SK-N-SH (cell line): ENCODE measurements at regions of chr18 and their contacts with region 1.

Region 1: GRCh38 chr18:75209129-75209950 is at the start of gene PTGR3:
- DNase-seq: peak; percentile 93
- H3K4me3 ChIP-seq: peak within 1 kb of the TSS; percentile 90 to 98
- H3K27ac ChIP-seq: peak within 1 kb of the TSS; percentile 82 to 97
- H3K4me1 ChIP-seq: peaks cover 19 to 33% of the 10 kb centered on the region in 2 experiments; a peak in 3 of 4 replicates
- H3K27me3 ChIP-seq: no peaks in the 10 kb centered on the region
- CTCF ChIP-seq: no peak
- EP300 ChIP-seq: peak in 1 of 2 experiments; percentile 5; a peak in 1 of 4 replicates
- RAD21 ChIP-seq: no peak
- polyA plus RNA-seq, gene PTGR3: 20.7 and 27.1 TPM in 2 replicates

Region 2: GRCh38 chr18:75023473-75023872 is 185.9 kb before region 1 on chr18:
- CTCF ChIA-PET with region 1: no interaction called
- POLR2A ChIA-PET with region 1: no interaction called
- DNase-seq: no peak
- H3K4me3 ChIP-seq: no peak overlapping the region
- H3K27ac ChIP-seq: no peak overlapping the region
- H3K4me1 ChIP-seq: no peaks in the 10 kb centered on the region; a peak in 2 of 4 replicates
- H3K27me3 ChIP-seq: no peaks in the 10 kb centered on the region
- CTCF ChIP-seq: no peak
- EP300 ChIP-seq: no peak
- RAD21 ChIP-seq: no peak

Region 3: DNA sequence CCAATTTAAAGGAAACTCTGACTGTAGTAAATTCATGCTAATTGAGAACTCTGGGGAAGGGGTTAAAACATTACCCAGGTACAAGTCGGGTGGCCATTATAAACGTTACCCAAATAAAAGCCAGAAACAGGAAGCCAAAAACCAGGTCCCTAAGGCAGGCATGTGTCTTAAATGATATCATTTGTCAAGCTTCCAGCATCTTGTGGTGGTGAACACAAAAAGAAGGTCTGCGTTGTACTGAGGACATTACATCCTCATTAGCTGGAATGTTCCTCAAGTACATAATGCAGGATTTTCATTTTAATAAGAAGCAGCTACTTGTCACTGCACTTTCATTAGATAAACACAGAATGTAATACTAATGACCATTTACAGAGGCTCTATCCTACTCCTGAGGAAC is 11.3 kb before region 1 on chr18:
- CTCF ChIA-PET with region 1: no interaction called
- POLR2A ChIA-PET with region 1: no interaction called
- DNase-seq: no peak
- H3K4me3 ChIP-seq: no peak overlapping the region
- H3K27ac ChIP-seq: peak overlapping the region in 1 of 2 experiments; percentile 22; a peak in 1 of 4 replicates
- H3K4me1 ChIP-seq: peaks cover 15 to 49% of the 10 kb centered on the region in 2 experiments; a peak in 2 of 4 replicates
- H3K27me3 ChIP-seq: no peaks in the 10 kb centered on the region
- CTCF ChIP-seq: no peak
- EP300 ChIP-seq: no peak
- RAD21 ChIP-seq: no peak

Region 4: DNA sequence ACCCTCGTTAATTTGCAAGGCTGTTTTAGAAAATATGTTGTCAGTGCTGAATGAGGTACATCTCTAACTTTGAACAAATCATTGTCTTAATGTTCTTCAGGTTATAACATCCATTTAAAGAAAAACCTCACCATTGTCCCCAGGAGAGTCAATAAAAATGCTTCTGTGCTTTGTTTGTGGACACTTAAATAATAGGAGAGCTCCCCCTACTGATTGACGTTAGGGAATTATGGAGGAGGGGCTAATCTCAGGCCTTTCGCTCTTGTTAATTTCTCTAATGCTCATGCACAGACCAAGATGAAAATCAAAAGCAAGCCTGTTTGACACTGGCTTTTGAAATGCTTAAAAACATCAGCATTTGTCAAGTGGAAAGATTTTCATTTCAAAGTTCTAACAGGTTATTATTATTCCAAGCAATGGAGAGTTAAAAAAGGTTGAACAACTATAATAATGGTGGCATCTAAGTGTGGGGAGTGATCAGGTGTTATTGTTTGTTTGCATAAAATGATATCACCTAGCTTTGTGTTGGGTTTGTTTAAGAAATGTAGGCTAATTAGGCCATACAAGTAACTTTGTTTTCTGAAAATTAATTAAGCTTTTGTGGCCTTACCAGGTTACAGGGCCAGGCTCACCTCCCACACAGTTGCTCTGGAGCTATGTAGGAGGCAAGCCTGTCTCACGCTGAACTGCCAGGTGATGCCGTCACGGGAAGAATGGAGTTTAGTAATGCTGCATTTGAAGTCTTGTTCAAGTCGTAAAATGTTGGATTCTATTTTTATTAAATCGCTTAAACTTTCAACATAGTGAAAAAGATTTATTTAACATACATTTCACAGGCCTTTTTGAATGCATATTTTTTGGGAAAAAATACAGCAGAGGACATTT is 269.9 kb after region 1 on chr18:
- CTCF ChIA-PET with region 1: interaction called, 10 read pairs
- POLR2A ChIA-PET with region 1: no interaction called
- DNase-seq: peak; percentile 57
- H3K4me3 ChIP-seq: no peak overlapping the region; a peak in 1 of 4 replicates
- H3K27ac ChIP-seq: no peak overlapping the region
- H3K4me1 ChIP-seq: no peaks in the 10 kb centered on the region
- H3K27me3 ChIP-seq: no peaks in the 10 kb centered on the region
- CTCF ChIP-seq: peak; percentile 73
- EP300 ChIP-seq: no peak
- RAD21 ChIP-seq: peak; percentile 88